Activated CD4-positive, alpha-beta T cell treated with anti-CD3 and anti-CD28 coated beads, Interleukin-2, amount 10 ng/mL, durations not matched to agents 7 days and 5 days (primary cell): ENCODE measurements at regions of chr9 and their contacts with region 1.

Region 1: DNA sequence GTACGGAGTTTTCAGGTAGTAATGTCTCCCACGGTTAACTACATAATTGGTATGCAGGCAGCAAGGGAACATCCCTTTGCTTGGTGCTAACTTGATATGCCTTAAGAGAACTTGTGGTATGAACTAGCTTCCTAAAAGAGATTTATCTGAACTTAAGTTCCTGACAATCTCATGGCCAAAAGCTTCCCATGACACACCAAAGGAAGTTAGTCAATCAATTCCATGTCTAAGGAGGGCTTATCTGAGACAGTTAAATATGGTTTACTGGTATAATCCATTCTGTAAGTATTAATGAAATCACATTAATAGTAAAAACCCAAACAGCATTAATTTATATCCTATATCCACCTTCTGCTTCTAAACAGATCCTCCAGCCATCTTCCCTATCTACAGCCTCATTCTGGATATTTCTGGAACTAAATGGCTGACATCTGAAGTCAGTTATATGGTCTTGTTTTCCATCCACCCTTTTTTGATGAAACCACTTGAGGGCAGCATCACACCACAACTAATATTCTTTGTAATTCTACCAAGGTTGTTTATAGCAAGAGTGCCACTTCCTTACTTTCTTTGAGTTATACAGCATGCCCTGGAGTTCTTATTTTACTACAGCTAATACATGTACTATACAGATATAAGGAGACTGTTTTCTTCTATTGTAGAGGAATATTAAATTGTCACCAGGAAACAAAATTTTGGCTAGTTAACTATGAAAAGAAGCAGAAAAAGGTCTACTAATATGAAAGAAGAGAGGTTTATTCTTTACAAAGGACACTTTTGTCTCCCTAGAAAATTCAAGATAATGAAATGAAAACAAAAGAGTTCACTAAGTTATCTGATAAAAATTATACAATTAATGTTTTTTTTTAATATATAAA is 34.7 kb downstream of the SHOC1 start:
- DNase-seq: peak; percentile 72
- H3K4me3 Mint-ChIP-seq: no peak overlapping the region
- H3K27ac Mint-ChIP-seq: no peak overlapping the region
- H3K4me1 Mint-ChIP-seq: peaks cover 3% of the 10 kb centered on the region
- H3K27me3 Mint-ChIP-seq: peaks cover 4% of the 10 kb centered on the region

Region 2: DNA sequence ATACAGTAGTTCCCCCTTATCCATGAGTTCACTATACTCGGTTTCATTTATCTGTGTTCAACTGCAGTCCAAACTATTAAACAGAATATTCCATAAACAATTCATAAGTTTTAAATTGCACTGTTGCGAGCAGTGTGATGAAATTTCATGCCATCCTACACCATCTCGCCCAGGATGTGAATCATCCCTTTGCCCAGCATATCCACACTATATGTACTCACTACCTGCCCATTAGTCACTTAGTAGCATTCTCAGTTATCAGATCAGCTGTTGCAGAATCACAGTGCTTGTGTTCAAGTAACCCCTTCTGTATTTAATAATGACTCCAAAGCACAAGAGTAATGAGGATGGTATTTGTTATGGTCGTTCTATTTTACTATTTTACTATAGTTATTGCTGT is 16.7 kb before region 1 on chr9:
- CTCF ChIA-PET with region 1: no interaction called
- POLR2A ChIA-PET with region 1: no interaction called
- DNase-seq: no peak
- H3K4me3 Mint-ChIP-seq: no peak overlapping the region
- H3K27ac Mint-ChIP-seq: no peak overlapping the region
- H3K4me1 Mint-ChIP-seq: peaks cover 3% of the 10 kb centered on the region
- H3K27me3 Mint-ChIP-seq: no peaks in the 10 kb centered on the region

Region 3: GRCh38 chr9:112061152-112061740 is 301.2 kb after region 1 on chr9:
- CTCF ChIA-PET with region 1: no interaction called
- POLR2A ChIA-PET with region 1: interaction called, 15 read pairs
- DNase-seq: peak; percentile 54
- H3K4me3 Mint-ChIP-seq: no peak overlapping the region
- H3K27ac Mint-ChIP-seq: peak overlapping the region; percentile 51
- H3K4me1 Mint-ChIP-seq: peaks cover 30% of the 10 kb centered on the region
- H3K27me3 Mint-ChIP-seq: no peaks in the 10 kb centered on the region